Ascending aorta (tissue), 2 donors: ENCODE measurements at regions of chr17 and their contacts with region 1.

Region 1: DNA sequence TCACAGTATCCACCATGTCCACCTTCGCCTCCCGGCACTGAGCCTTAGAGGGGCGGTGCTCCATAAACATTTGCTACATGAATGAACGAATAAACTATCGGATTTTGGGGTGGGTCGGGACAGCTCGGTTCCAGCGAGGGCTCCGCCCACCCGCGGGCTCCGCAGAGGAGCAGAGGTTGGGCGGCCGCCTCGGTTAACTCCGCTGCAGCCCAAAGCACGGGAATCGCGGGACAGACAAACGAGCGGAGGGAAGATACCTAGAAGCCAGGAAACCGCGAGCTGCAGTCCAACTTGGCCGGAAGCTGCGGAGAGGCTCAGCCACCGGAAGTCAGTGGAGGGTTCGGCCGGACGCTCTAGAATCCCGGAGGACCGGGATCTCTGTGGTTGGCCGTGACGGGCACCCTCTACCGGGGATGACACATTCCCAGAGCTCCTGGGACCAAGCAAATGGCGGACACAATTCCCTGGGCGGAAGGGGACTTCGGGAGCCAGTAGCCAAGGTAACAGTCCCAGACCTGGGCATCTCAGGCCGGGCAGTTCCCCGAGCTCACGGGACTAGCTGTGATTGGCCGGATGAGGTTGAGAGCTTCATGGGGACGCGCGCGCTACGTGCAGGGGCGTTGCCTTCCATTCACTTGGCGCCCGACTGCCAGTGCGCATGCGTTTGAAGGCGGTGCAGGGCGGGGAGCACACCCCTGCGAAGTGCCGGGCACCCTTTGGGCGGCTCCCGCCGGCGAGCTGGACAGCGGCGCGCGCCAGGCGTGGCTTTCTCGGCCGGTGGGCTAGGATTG is 501 bp upstream of the MAPK7 start:
- DNase-seq: peak; percentile 95 to 99
- H3K4me3 ChIP-seq: peak overlapping the region; percentile 81 to 98
- H3K27ac ChIP-seq: peak overlapping the region; percentile 93 to 98
- H3K4me1 ChIP-seq: peaks cover 3 to 15% of the 10 kb centered on the region in 2 donors
- H3K27me3 ChIP-seq: no peaks in the 10 kb centered on the region
- CTCF ChIP-seq: peak in 1 of 3 experiments; percentile 10

Region 2: DNA sequence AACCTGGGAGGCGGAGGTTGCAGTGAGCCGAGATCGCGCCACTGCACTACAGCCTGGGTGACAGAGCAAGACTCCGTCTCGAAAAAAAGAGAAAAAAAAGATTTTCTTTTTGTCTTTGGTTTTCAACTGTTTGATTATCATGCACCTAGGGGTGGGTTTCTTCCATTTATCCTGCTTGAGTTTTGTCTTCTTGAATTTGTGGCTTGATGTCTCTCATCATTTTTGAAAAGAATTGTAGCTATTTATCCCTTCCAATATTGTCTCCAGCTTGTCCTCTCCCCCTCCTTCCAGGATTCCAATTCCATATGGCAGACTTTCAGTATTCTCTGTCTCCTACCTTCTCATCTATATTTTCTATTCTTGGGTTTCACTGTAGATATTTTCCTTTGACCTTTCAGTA is 23.0 kb before region 1 on chr17:
- intact Hi-C with region 1: no loop called
- DNase-seq: no peak
- H3K4me3 ChIP-seq: no peak overlapping the region
- H3K27ac ChIP-seq: no peak overlapping the region
- H3K4me1 ChIP-seq: no peaks in the 10 kb centered on the region
- H3K27me3 ChIP-seq: no peaks in the 10 kb centered on the region
- CTCF ChIP-seq: no peak

Region 3: GRCh38 chr17:19398301-19399181 is 20.7 kb after region 1 on chr17:
- intact Hi-C with region 1: loop called (anchors 1 kb)
- DNase-seq: peak in 1 of 2 donors; percentile 81
- H3K4me3 ChIP-seq: no peak overlapping the region
- H3K27ac ChIP-seq: peak overlapping the region; percentile 86 to 88
- H3K4me1 ChIP-seq: peaks cover 8 to 23% of the 10 kb centered on the region in 2 donors
- H3K27me3 ChIP-seq: no peaks in the 10 kb centered on the region
- CTCF ChIP-seq: no peak

Region 4: GRCh38 chr17:19507775-19508576 is 130.2 kb after region 1 on chr17:
- intact Hi-C with region 1: loop called (anchors 1 kb)
- DNase-seq: peak; percentile 49 to 95
- H3K4me3 ChIP-seq: peak overlapping the region; percentile 83 to 87
- H3K27ac ChIP-seq: peak overlapping the region; percentile 97 to 98
- H3K4me1 ChIP-seq: peaks cover 0 to 6% of the 10 kb centered on the region in 2 donors
- H3K27me3 ChIP-seq: no peaks in the 10 kb centered on the region
- CTCF ChIP-seq: no peak